ENCODE measurements at regions of chr2 and their contacts with region 1.

Region 1: GRCh38 chr2:97697252-97698235 is 15.8 kb upstream of the ZAP70 start:
- DNase-seq: peak; percentile 79 to 91 (median 90)
- H3K4me3 ChIP-seq: no peak overlapping the region
- H3K27ac ChIP-seq: no peak overlapping the region
- H3K4me1 ChIP-seq: no peaks in the 10 kb centered on the region
- H3K27me3 ChIP-seq: no peaks in the 10 kb centered on the region
- CTCF ChIP-seq: peak; percentile 71 to 93 (median 91)
- EP300 ChIP-seq: no peak
- POLR2A ChIP-seq: no peak

Region 2: GRCh38 chr2:96065381-96065930 is 1632.1 kb before region 1 on chr2:
- intact Hi-C with region 1: loop called in 1 of 4 experiments (anchors 10 kb)
- DNase-seq: no peak
- H3K4me3 ChIP-seq: no peak overlapping the region
- H3K27ac ChIP-seq: no peak overlapping the region
- H3K4me1 ChIP-seq: no peaks in the 10 kb centered on the region
- H3K27me3 ChIP-seq: no peaks in the 10 kb centered on the region
- CTCF ChIP-seq: no peak
- EP300 ChIP-seq: no peak
- POLR2A ChIP-seq: no peak

Region 3: GRCh38 chr2:97950329-97951154 is 253.0 kb after region 1 on chr2:
- intact Hi-C with region 1: no loop called
- DNase-seq: no peak
- H3K4me3 ChIP-seq: no peak overlapping the region
- H3K27ac ChIP-seq: no peak overlapping the region
- H3K4me1 ChIP-seq: peaks cover 5% of the 10 kb centered on the region
- H3K27me3 ChIP-seq: no peaks in the 10 kb centered on the region
- CTCF ChIP-seq: no peak
- EP300 ChIP-seq: no peak
- POLR2A ChIP-seq: no peak

Region 4: DNA sequence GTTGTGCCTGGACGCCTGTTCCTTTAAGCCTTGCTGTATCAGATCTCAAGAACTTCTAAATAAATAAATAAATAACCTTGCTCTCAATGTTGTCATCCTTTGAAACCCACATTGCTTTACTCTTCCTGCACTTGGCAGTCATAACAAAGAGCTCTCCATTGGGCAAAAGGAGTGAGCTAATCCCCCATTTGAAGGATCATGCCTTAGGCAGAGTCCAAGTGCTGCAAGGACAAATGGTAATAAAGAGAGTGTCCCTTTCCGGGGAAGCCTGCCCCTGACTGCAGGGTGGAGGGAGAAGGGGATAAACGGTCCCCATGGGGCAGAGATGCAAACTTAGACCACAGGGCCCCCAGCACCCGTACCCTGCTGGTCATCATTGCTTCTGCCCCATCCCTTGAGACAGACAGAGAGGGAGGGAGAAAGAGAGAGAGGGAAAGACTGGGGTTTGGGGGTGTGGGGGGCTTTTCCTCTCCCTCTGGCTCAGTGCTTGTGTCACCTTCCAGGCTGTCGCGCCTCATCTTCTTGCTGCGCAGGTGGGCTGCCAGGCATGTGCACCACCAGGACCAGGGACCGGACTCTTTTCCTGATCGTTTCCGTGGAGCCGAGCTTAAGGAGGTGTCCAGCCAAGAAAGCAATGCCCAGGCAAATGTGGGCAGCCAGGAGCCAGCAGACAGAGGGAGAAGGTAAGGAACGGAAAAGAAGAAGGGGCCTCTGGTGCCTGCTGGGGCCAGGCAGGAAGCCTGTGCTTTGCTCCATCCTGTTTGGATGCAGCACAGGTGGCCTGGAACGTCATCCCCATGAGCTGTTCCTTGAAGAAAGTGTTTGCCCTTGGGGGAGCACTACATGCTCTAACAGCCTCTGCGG is 682.4 kb after region 1 on chr2:
- intact Hi-C with region 1: loop called in 1 of 4 experiments (anchors 5 kb)
- DNase-seq: no peak
- H3K4me3 ChIP-seq: no peak overlapping the region
- H3K27ac ChIP-seq: no peak overlapping the region
- H3K4me1 ChIP-seq: peaks cover 13% of the 10 kb centered on the region
- H3K27me3 ChIP-seq: no peaks in the 10 kb centered on the region
- CTCF ChIP-seq: no peak
- EP300 ChIP-seq: no peak
- POLR2A ChIP-seq: no peak